ENCODE measurements at regions of chr19 and their contacts with region 1.

Region 1: GRCh38 chr19:40613640-40614303 is 12.6 kb downstream of the LTBP4 start:
- DNase-seq: peak; percentile 72 to 92
- ATAC-seq: peak; percentile 54 to 76
- H3K4me3 ChIP-seq: peak overlapping the region; percentile 44
- H3K27ac ChIP-seq: peak overlapping the region; percentile 60 to 74
- H3K4me1 ChIP-seq: peaks cover 16% of the 10 kb centered on the region; the same call in 2 of the 3 replicates
- CTCF ChIP-seq: no peak
- EP300 ChIP-seq: no peak
- POLR2A ChIP-seq: no peak
- RAD21 ChIP-seq: no peak

Region 2: DNA sequence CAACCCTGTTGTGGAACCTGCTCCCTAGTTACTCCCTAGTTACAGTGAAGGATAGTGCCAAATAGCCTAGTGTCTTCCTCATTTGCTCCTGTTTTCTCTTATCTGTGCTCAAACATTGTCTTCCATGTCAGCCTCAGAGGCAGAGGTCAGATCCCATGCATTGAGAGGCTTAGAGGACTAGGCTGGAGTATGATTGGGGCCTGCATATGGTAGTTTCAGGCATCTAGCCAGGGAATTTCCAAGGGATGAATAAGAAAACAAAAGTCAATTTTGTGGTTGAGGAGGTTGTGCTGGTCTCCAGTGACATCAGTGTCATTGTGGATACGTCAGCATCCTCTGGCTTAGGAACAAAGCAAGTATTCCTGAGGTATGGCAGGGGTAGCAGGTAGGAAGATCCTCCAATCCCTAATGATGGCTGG is 607.5 kb before region 1 on chr19:
- CTCF ChIA-PET with region 1: no interaction called
- POLR2A ChIA-PET with region 1: interaction called, 12 read pairs
- DNase-seq: peak in 1 of 2 experiments; percentile 37
- ATAC-seq: no peak; a peak in 2 of 6 replicates
- H3K4me3 ChIP-seq: no peak overlapping the region
- H3K27ac ChIP-seq: no peak overlapping the region
- H3K4me1 ChIP-seq: no peaks in the 10 kb centered on the region
- CTCF ChIP-seq: no peak
- EP300 ChIP-seq: no peak
- POLR2A ChIP-seq: no peak
- RAD21 ChIP-seq: no peak